Mammary epithelial cell (primary cell): ENCODE measurements at regions of chr1 and their contacts with region 1.

Region 1: GRCh38 chr1:214551436-214552173 is at the start of gene PTPN14:
- DNase-seq: peak; percentile 92
- H3K4me3 ChIP-seq: peak within 1 kb of the TSS; percentile 76 to 96 (median 90)
- H3K27ac ChIP-seq: peak within 1 kb of the TSS; percentile 99
- H3K4me1 ChIP-seq: peaks cover 35% of the 10 kb centered on the region
- H3K27me3 ChIP-seq: no peaks in the 10 kb centered on the region
- CTCF ChIP-seq: peak; percentile 22 to 55
- total RNA-seq, gene PTPN14: 152 to 157 TPM

Region 2: GRCh38 chr1:214377886-214378285 is 173.7 kb before region 1 on chr1:
- CTCF ChIA-PET with region 1: no interaction called
- dilution Hi-C with region 1: no loop called
- in situ Hi-C with region 1: no loop called
- intact Hi-C with region 1: loop called (anchors 5 kb)
- DNase-seq: peak; percentile 26
- H3K4me3 ChIP-seq: no peak overlapping the region
- H3K27ac ChIP-seq: peak overlapping the region; percentile 47
- H3K4me1 ChIP-seq: peaks cover 40% of the 10 kb centered on the region
- H3K27me3 ChIP-seq: no peaks in the 10 kb centered on the region
- CTCF ChIP-seq: no peak

Region 3: DNA sequence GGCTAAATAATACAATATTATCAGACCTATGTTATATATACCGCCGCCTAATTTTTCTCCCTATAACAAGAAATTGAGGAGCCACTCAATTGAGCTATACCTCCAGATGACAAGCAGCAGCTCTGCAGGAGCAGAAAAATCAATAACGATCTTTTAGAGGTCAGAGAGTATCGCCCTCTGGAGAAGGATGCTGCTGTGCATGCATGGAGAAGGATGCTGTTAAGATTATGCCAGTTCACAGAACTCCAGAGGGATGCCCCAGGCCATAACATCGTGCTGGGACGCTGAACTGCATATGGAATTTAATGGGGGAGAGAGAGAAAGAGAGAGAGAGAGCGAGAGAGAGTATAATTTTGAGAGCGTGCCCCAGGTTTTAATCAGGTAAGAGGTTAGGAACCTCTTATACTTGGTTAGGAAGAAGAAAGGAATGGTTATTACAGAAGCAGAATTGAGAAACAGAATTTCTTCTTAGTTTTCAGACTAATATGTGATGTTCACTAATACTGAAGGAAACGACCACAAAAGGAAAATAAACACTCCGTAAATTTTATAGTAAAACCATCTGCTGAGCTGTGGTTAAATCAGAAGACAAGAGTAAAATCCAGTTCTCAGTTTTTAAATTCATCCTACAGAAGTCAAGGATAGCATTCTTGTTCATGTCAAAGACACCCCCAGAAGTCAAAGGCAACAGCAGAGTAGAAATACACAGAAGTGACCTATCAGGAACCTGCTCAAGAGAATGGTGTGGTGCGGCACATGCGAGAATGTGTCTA is 159.5 kb before region 1 on chr1:
- CTCF ChIA-PET with region 1: no interaction called
- dilution Hi-C with region 1: no loop called
- in situ Hi-C with region 1: no loop called
- intact Hi-C with region 1: loop called (anchors 5 kb)
- DNase-seq: no peak
- H3K4me3 ChIP-seq: no peak overlapping the region
- H3K27ac ChIP-seq: no peak overlapping the region
- H3K4me1 ChIP-seq: peaks cover 4% of the 10 kb centered on the region
- H3K27me3 ChIP-seq: no peaks in the 10 kb centered on the region
- CTCF ChIP-seq: no peak

Region 4: GRCh38 chr1:214416417-214416816 is 135.2 kb before region 1 on chr1:
- CTCF ChIA-PET with region 1: no interaction called
- dilution Hi-C with region 1: no loop called
- in situ Hi-C with region 1: no loop called
- intact Hi-C with region 1: no loop called
- DNase-seq: no peak
- H3K4me3 ChIP-seq: no peak overlapping the region
- H3K27ac ChIP-seq: peak overlapping the region; percentile 57
- H3K4me1 ChIP-seq: peaks cover 65% of the 10 kb centered on the region
- H3K27me3 ChIP-seq: no peaks in the 10 kb centered on the region
- CTCF ChIP-seq: no peak

Region 5: GRCh38 chr1:214439352-214440119 is 112.1 kb before region 1 on chr1:
- CTCF ChIA-PET with region 1: interaction called, 4 read pairs
- dilution Hi-C with region 1: loop called (anchors 5 kb)
- in situ Hi-C with region 1: no loop called
- intact Hi-C with region 1: no loop called
- DNase-seq: peak; percentile 99
- H3K4me3 ChIP-seq: peak overlapping the region in 2 of 3 experiments; percentile 7 to 28
- H3K27ac ChIP-seq: peak overlapping the region; percentile 100
- H3K4me1 ChIP-seq: peaks cover 55% of the 10 kb centered on the region
- H3K27me3 ChIP-seq: no peaks in the 10 kb centered on the region
- CTCF ChIP-seq: no peak

Region 6: DNA sequence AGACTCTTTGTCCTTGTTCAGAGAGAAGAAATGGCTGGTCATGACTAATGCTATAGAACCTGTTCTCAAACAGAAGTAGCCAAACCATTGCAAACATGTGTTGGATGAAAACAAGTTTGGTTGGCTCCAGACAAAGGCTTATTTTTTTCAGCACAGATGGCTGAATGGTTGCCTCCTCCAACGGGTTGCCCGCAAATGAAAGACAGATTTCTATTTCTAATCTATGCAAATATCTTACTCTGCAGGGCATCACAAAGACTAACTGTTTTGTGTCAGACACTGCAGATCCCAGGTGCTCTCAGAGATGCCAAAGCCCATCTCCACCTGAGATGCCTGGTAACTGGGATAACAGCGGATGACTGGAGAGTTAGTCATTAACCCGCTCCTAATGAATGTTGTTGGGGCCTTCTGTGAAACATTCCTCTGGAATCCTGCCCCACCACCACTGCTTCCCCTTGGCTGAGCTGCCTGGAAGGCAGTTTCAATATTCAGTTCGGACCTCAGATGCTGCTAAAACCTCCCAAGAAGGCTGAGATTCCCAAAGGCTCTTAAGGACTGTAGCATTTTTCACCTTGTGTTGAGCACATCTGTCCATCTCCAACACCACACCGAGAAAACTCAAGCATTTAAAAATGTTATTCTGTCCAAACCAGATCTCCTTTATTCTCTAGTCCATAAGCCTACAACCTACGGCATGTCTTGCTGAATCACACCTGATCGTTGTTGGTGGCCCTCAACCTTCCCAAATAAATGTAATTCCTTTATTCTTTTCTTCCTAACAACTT is 104.6 kb before region 1 on chr1:
- CTCF ChIA-PET with region 1: no interaction called
- dilution Hi-C with region 1: loop called (anchors 5 kb)
- in situ Hi-C with region 1: no loop called
- intact Hi-C with region 1: loop called (anchors 2 kb)
- DNase-seq: peak; percentile 99
- H3K4me3 ChIP-seq: peak overlapping the region in 2 of 3 experiments; percentile 28 to 47
- H3K27ac ChIP-seq: peak overlapping the region; percentile 100
- H3K4me1 ChIP-seq: peaks cover 71% of the 10 kb centered on the region
- H3K27me3 ChIP-seq: no peaks in the 10 kb centered on the region
- CTCF ChIP-seq: no peak

Region 7: DNA sequence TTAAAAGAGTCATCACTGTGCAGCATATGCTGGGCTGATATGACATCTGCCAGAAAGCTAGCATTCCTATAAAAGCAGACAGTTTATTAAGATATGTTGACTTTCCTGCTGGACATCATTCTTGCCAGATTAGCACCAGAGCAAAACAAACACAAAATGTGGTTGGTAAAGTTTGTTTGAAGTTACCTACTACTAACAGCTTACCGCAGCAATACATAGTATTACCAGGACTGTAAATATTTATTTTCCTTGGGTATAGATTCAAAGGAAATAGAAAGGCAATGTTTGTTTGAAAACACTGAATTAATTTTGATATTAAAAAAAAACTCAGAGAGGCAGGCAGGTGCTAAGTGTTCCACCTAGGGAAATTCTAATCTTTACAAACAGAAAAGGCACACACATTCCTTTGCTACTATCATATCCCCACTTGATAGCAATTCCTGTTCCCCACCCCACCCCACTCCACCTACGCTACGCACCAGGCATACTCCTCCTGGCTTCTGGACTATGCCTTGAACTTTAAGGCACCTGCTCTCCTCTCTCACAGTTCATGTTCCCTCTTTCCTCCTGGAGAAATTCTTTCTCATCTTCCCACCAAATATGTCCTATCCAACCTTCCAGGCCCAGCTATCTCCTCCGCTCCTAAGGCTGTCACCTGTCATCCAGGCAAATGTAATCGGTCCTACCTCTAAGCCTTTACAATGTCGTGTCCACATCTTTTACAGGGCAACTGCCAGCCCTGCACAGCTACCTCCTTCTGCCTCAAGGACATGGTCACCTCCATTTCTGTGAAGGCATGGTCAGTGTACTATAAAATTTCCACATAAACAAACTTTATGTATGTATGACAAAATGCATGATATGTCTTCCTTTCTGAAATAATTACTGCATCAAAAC is 34.9 kb before region 1 on chr1:
- CTCF ChIA-PET with region 1: no interaction called
- dilution Hi-C with region 1: no loop called
- in situ Hi-C with region 1: no loop called
- intact Hi-C with region 1: no loop called
- DNase-seq: no peak
- H3K4me3 ChIP-seq: no peak overlapping the region
- H3K27ac ChIP-seq: no peak overlapping the region
- H3K4me1 ChIP-seq: peaks cover 28% of the 10 kb centered on the region
- H3K27me3 ChIP-seq: no peaks in the 10 kb centered on the region
- CTCF ChIP-seq: no peak

Region 8: DNA sequence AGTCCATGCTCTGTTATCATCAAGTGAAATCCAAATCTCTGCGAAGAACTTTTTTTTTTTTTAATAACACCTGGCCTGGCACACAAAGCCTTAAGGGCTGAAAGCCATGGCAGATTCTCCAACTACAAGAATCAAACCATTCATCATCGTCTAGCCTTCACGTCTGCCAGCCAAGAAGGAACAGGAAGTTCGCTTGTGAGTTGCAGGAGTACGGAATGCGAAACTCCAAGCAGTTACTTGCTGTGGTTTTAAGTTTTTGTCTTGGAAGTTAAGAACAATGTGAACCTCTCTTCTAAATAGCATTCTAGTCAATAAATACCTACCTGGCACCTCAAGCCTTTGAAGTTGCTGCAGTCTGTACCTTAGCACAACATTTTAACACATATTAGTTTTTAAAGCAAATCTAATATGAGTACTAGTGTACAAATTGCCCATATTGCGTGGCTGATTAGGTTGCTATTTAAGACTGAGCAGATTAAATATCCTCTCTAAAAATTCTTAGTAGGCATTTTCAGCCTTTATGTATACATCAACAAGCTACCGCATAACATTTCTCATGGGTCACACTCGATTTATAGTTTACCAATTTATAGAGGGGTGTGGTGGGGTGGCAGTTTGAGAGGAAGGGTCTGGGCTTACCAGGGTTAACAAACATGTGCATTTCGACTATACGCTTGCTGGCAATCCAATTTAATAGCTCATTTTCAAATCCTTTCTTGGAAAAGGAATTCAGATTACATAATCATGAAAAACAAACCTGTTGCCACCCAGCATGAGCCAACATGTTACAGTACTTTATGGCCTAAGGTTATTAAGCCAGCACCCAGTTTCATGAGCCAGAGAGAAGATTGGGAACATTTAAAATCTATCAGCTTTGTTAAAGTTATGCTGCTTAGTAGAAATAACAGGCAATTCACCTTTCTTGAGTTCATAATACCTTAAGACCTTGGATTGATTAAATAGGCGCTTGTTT is 22.1 kb after region 1 on chr1:
- CTCF ChIA-PET with region 1: interaction called, 5 read pairs
- dilution Hi-C with region 1: no loop called
- in situ Hi-C with region 1: no loop called
- intact Hi-C with region 1: loop called (anchors 1 kb)
- DNase-seq: peak; percentile 87
- H3K4me3 ChIP-seq: peak overlapping the region; percentile 9 to 25 (median 16)
- H3K27ac ChIP-seq: peak overlapping the region; percentile 99
- H3K4me1 ChIP-seq: peaks cover 68% of the 10 kb centered on the region
- H3K27me3 ChIP-seq: no peaks in the 10 kb centered on the region
- CTCF ChIP-seq: no peak